ENCODE measurements at regions of chr6 and their contacts with region 1.

Region 1: GRCh38 chr6:36615018-36615761 is 21.0 kb downstream of the SRSF3 start:
- DNase-seq: no peak
- H3K4me3 ChIP-seq: no peak overlapping the region
- H3K27me3 ChIP-seq: no peaks in the 10 kb centered on the region
- CTCF ChIP-seq: peak; percentile 79

Region 2: GRCh38 chr6:36169023-36170007 is 445.9 kb before region 1 on chr6:
- CTCF ChIA-PET with region 1: no interaction called
- POLR2A ChIA-PET with region 1: no interaction called
- DNase-seq: no peak
- H3K4me3 ChIP-seq: no peak overlapping the region
- H3K27me3 ChIP-seq: no peaks in the 10 kb centered on the region
- CTCF ChIP-seq: no peak

Region 3: GRCh38 chr6:36716476-36717093 is 101.4 kb after region 1 on chr6:
- CTCF ChIA-PET with region 1: interaction called, 15 read pairs
- POLR2A ChIA-PET with region 1: no interaction called
- DNase-seq: no peak
- H3K4me3 ChIP-seq: no peak overlapping the region
- H3K27me3 ChIP-seq: peaks cover 4% of the 10 kb centered on the region
- CTCF ChIP-seq: no peak

Region 4: GRCh38 chr6:36724514-36725390 is 109.6 kb after region 1 on chr6:
- CTCF ChIA-PET with region 1: interaction called, 37 read pairs
- POLR2A ChIA-PET with region 1: no interaction called
- DNase-seq: no peak
- H3K4me3 ChIP-seq: no peak overlapping the region
- H3K27me3 ChIP-seq: no peaks in the 10 kb centered on the region; the same call in none of the 2 replicates
- CTCF ChIP-seq: peak; percentile 70

Region 5: DNA sequence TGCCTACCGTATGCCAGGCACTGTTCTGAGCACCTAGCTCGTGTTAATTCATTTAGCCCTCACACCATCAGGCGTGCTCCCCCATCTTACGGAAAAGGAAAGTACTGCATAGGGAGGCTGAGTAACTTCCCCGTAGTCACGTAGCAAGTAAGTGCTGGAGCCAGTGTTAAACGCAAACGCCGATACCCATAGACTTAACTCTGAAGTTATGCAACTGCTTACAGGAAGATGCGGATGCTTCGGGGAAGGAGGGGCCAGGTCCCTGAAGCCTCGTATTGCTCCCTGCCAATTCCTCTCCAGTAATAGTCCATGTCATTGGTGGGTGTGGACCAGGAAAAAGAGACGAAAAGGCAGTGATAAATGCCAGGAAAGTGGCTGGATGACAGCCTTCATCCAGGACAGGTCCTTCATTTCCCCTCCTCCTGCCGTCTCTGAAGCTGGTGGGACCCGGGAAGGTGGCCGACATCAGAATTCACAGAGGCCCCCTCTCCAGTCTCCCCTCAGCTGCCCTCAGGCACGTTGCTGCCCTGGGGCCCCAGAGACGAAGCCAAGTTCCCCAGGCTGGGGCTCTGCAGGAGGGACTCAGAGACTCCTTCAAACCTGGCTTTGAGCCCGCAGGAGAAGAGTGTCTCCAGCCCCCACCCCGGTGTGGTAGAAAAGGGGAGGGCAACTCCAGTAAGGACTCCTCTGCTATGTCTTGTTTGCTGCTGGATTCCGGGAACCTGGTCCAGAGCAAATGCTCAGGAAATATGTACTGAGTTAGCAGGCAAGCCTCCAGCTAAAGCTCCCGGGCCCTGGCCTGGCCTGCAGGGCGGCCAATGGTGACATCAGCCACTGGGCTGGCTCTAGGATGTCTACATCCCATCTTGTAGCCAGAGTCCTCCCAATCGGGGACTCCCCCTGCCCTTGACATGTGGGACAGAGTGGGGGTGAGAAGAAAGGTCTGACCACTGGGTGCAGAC is 120.2 kb after region 1 on chr6:
- CTCF ChIA-PET with region 1: interaction called, 21 read pairs
- POLR2A ChIA-PET with region 1: no interaction called
- DNase-seq: peak; percentile 52
- H3K4me3 ChIP-seq: peak overlapping the region; percentile 8; the same call in 1 of the 2 replicates
- H3K27me3 ChIP-seq: no peaks in the 10 kb centered on the region
- CTCF ChIP-seq: peak; percentile 38

Region 6: GRCh38 chr6:36759148-36759759 is 144.1 kb after region 1 on chr6:
- CTCF ChIA-PET with region 1: interaction called, 45 read pairs
- POLR2A ChIA-PET with region 1: interaction called, 10 read pairs
- DNase-seq: no peak
- H3K4me3 ChIP-seq: no peak overlapping the region
- H3K27me3 ChIP-seq: peaks cover 2% of the 10 kb centered on the region
- CTCF ChIP-seq: peak; percentile 100